Heart left ventricle (tissue), 16 donors: ENCODE measurements at regions of chr5 and their contacts with region 1.

Region 1: GRCh38 chr5:160333721-160334120 is 21.4 kb upstream of the CCNJL start:
- DNase-seq: no peak
- ATAC-seq: peak in 1 of 4 donors; percentile 20
- H3K4me3 ChIP-seq: no peak overlapping the region
- H3K27ac ChIP-seq: no peak overlapping the region
- H3K4me1 ChIP-seq: peaks cover 0 to 7% (median 0%) of the 10 kb centered on the region in 12 donors
- H3K27me3 ChIP-seq: no peaks in the 10 kb centered on the region
- CTCF ChIP-seq: no peak
- POLR2A ChIP-seq: no peak

Region 2: GRCh38 chr5:160064995-160065630 is 268.6 kb before region 1 on chr5:
- intact Hi-C with region 1: no loop called
- DNase-seq: no peak
- ATAC-seq: no peak
- H3K4me3 ChIP-seq: no peak overlapping the region
- H3K27ac ChIP-seq: peak overlapping the region in 1 of 12 donors; percentile 16
- H3K4me1 ChIP-seq: peaks cover 0 to 13% (median 0%) of the 10 kb centered on the region in 12 donors
- H3K27me3 ChIP-seq: no peaks in the 10 kb centered on the region
- CTCF ChIP-seq: no peak
- POLR2A ChIP-seq: no peak

Region 3: DNA sequence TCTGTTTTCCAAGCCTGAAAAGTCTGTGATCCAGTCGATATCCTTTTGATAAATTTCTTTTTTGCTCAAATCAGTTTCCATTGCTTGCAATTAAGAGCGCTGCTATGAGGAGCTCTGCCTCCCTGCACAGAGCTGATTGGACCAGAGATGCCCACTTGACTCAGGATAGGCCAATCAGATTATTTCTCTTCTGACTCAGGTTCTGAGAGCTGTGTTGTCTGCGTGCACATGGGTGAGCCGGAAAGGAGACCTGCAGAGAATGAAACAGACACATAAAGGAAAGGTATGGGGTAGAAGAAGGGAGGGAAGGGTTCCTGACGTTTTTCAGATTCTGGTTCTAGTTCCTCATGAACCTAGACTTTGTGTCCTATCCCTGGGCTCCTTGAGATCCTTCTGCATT is 120.2 kb before region 1 on chr5:
- intact Hi-C with region 1: loop called in 1 of 10 experiments (anchors 5 kb)
- DNase-seq: no peak
- ATAC-seq: peak in 1 of 4 donors; percentile 43
- H3K4me3 ChIP-seq: no peak overlapping the region
- H3K27ac ChIP-seq: no peak overlapping the region
- H3K4me1 ChIP-seq: peaks cover 0 to 5% (median 0%) of the 10 kb centered on the region in 12 donors
- H3K27me3 ChIP-seq: no peaks in the 10 kb centered on the region
- CTCF ChIP-seq: no peak
- POLR2A ChIP-seq: no peak